Transverse colon (tissue), 4 donors: ENCODE measurements at regions of chr6 and their contacts with region 1.

Region 1: GRCh38 chr6:14210663-14211561 is 93.3 kb downstream of the CD83 start:
- DNase-seq: peak; percentile 96
- H3K4me3 ChIP-seq: peak overlapping the region; percentile 57 to 93 (median 69)
- H3K27ac ChIP-seq: peak overlapping the region; percentile 82 to 90 (median 84)
- H3K4me1 ChIP-seq: peaks cover 6 to 39% (median 19%) of the 10 kb centered on the region in 4 donors
- H3K27me3 ChIP-seq: no peaks in the 10 kb centered on the region
- CTCF ChIP-seq: peak; percentile 30 to 67 (median 63)
- EP300 ChIP-seq: no peak
- POLR2A ChIP-seq: peak; percentile 70

Region 2: GRCh38 chr6:14254505-14254904 is 43.6 kb after region 1 on chr6:
- in situ Hi-C with region 1: no loop called
- intact Hi-C with region 1: no loop called
- DNase-seq: no peak
- H3K4me3 ChIP-seq: no peak overlapping the region
- H3K27ac ChIP-seq: no peak overlapping the region
- H3K4me1 ChIP-seq: no peaks in the 10 kb centered on the region
- H3K27me3 ChIP-seq: no peaks in the 10 kb centered on the region
- CTCF ChIP-seq: no peak
- EP300 ChIP-seq: no peak
- POLR2A ChIP-seq: no peak

Region 3: GRCh38 chr6:14711056-14711703 is 500.3 kb after region 1 on chr6:
- in situ Hi-C with region 1: loop called in 1 of 4 experiments (anchors 10 kb)
- intact Hi-C with region 1: no loop called
- DNase-seq: peak; percentile 49
- H3K4me3 ChIP-seq: no peak overlapping the region
- H3K27ac ChIP-seq: no peak overlapping the region
- H3K4me1 ChIP-seq: peaks cover 0 to 9% (median 0%) of the 10 kb centered on the region in 4 donors
- H3K27me3 ChIP-seq: no peaks in the 10 kb centered on the region
- CTCF ChIP-seq: peak; percentile 30 to 45 (median 39)
- EP300 ChIP-seq: no peak
- POLR2A ChIP-seq: no peak

Region 4: DNA sequence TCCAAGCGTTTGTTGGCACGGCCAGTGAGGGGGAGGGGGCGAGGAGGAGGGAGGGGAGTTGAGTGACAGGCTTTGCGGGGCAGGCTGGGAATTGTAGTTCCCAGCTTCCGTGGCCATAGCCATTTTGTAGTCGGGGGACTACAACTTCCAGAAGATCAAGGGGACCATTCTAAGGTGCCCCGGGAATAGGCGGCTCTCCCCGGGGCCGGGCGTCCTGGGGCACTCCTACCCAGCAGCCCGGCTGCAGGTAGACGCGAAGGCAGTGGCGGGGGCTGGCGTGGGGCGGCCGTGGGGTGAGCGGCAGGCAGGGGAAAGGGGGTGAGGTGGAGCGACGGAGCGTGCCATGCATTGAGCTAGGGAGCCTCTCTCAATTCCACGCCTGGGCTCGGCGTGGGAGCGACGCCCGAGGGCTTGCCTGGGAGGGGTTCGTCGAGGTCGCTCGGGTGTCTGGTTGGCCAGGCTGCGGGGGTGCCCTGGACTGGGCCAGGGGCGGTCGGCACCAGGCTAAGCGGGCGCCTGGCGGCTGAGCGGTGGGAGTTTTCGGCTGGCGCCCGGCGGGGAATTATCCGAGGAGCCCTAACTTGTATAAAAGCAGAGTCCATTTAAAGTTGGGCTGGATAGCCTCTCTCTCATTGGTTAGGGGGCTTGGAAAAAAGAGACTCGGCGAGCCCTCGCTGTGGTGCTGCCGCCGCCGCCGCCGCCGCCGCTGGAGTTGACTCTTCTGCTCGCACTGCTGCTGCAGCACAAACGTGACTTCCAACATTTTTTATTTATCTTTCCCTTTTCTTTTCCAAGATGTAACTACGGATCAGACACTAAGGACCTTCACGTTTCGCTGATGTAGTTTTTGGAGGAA is 1034.7 kb after region 1 on chr6 and contains the start of gene JARID2:
- in situ Hi-C with region 1: loop called in 2 of 4 experiments (anchors 25 kb)
- intact Hi-C with region 1: no loop called
- DNase-seq: peak; percentile 99
- H3K4me3 ChIP-seq: peak within 1 kb of the TSS; percentile 79 to 90 (median 86)
- H3K27ac ChIP-seq: peak within 1 kb of the TSS; percentile 91 to 92 (median 91)
- H3K4me1 ChIP-seq: peaks cover 0 to 23% (median 22%) of the 10 kb centered on the region in 4 donors
- H3K27me3 ChIP-seq: no peaks in the 10 kb centered on the region
- CTCF ChIP-seq: peak in 2 of 5 experiments; percentile 8 to 43
- EP300 ChIP-seq: no peak
- POLR2A ChIP-seq: peak; percentile 96
- total RNA-seq, gene JARID2: 9.4 to 18.7 (median 10.9) TPM

Region 5: DNA sequence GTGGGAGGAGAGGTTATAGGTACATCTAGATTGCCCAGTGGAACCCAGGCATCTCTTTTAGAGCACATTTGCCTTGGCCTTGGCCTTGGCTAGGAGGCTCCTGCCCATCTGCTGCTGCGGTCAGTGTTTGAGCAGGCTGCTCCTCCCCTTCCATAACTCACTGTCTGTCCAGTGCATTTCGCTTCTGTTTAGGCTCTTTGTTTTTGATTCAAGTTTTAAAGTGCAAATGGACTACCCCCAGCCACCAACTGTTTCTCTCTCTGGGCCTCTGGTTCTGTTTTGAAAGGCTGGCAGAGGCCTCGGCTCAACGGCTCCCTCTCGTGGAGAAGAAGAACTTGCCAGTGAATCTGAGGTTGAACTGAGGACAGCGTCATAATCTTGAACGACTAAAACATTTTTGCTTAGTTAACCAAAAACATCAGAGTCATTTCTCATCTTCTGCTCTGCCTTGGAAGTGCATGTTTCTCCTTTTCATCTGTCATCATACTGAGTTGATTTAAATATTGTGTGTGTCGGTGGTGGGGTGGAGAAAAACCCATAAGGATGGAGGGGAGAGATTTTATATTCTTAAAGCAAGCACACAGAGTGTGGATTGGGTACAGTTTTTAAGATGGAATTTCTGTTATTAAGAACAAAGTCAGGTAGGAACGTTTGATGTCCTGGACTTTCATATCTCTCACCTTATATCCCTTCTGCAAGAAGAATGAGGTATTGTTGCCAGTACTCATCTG is 1280.5 kb after region 1 on chr6:
- in situ Hi-C with region 1: loop called in 3 of 4 experiments (anchors 25 kb)
- intact Hi-C with region 1: loop called (anchors 10 kb)
- DNase-seq: peak; percentile 75
- H3K4me3 ChIP-seq: no peak overlapping the region
- H3K27ac ChIP-seq: peak overlapping the region in 2 of 4 donors; percentile 21 to 31
- H3K4me1 ChIP-seq: peaks cover 3 to 14% (median 6%) of the 10 kb centered on the region in 4 donors
- H3K27me3 ChIP-seq: no peaks in the 10 kb centered on the region
- CTCF ChIP-seq: peak; percentile 77 to 92 (median 91)
- EP300 ChIP-seq: no peak
- POLR2A ChIP-seq: no peak

Region 6: GRCh38 chr6:15621203-15622044 is 1410.5 kb after region 1 on chr6:
- in situ Hi-C with region 1: loop called in 1 of 4 experiments (anchors 25 kb)
- intact Hi-C with region 1: no loop called
- DNase-seq: peak; percentile 20
- H3K4me3 ChIP-seq: no peak overlapping the region
- H3K27ac ChIP-seq: peak overlapping the region in 2 of 4 donors; percentile 14 to 37
- H3K4me1 ChIP-seq: peaks cover 0 to 29% (median 6%) of the 10 kb centered on the region in 4 donors
- H3K27me3 ChIP-seq: no peaks in the 10 kb centered on the region
- CTCF ChIP-seq: no peak
- EP300 ChIP-seq: no peak
- POLR2A ChIP-seq: no peak